Transverse colon (tissue), 4 donors: ENCODE measurements at regions of chr1 and their contacts with region 1.

Region 1: GRCh38 chr1:17156108-17156507 is 36.9 kb upstream of the PADI2 start:
- DNase-seq: no peak
- H3K4me3 ChIP-seq: no peak overlapping the region
- H3K27ac ChIP-seq: no peak overlapping the region
- H3K4me1 ChIP-seq: peaks cover 0 to 3% (median 0%) of the 10 kb centered on the region in 4 donors
- H3K27me3 ChIP-seq: peaks cover 14% of the 10 kb centered on the region
- CTCF ChIP-seq: no peak
- EP300 ChIP-seq: no peak
- POLR2A ChIP-seq: no peak

Region 2: DNA sequence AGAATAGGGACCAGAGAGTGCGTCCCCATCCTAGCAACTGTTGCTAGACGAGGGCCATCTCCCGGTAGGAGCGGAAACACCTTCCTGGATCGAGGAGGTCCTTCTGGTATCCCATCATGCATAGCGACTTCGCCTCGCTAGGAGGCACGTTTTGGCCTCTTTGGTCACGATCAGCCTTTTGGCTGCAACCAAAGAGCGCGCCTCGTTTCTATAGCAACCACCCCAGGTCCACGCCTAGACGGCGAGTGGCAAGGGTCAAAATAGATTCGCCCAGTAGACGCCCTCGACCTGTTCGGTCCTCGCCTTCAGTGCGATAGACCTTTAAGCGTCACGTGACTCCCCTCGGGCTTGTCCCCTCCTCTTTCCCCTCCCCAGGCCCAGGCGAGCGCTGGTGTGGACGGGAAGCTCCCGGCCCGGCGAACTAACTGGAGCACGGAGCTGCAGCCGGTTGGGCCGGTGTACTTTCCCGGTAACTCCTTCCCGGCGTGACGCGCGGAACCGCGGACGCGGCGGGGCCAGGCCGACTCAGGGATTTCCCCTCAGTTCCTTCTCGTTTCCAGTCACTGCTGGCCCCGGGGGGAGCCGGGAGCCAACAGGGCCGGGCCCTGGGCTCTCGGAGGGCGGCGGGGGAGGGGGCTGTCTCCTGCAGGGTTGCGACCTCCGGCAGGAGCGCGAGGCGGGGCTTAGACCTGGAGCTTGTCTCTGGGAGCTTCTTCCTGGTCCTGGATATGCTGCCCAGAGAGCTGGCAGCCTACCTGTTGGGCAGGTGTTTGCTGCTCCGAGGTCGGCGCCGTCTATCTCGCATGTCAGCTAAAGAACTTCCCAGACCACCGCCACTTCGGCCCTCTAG is 1629.4 kb before region 1 on chr1 and contains the start of gene DNAJC16:
- in situ Hi-C with region 1: no loop called
- intact Hi-C with region 1: loop called (anchors 5 kb)
- DNase-seq: peak; percentile 99
- H3K4me3 ChIP-seq: peak within 1 kb of the TSS; percentile 75 to 98 (median 92)
- H3K27ac ChIP-seq: peak within 1 kb of the TSS; percentile 96 to 99 (median 98)
- H3K4me1 ChIP-seq: peaks cover 22 to 36% (median 27%) of the 10 kb centered on the region in 4 donors
- H3K27me3 ChIP-seq: no peaks in the 10 kb centered on the region
- CTCF ChIP-seq: peak in 3 of 5 experiments; percentile 7 to 42 (median 37)
- EP300 ChIP-seq: peak; percentile 72
- POLR2A ChIP-seq: peak; percentile 94
- total RNA-seq, gene DNAJC16: 7.8 to 30.3 (median 19.7) TPM

Region 3: GRCh38 chr1:17831619-17832018 is 675.5 kb after region 1 on chr1:
- in situ Hi-C with region 1: no loop called
- intact Hi-C with region 1: no loop called
- DNase-seq: no peak
- H3K4me3 ChIP-seq: no peak overlapping the region
- H3K27ac ChIP-seq: no peak overlapping the region
- H3K4me1 ChIP-seq: no peaks in the 10 kb centered on the region
- H3K27me3 ChIP-seq: peaks cover 22% of the 10 kb centered on the region
- CTCF ChIP-seq: no peak
- EP300 ChIP-seq: no peak
- POLR2A ChIP-seq: no peak